Transverse colon (tissue), 4 donors: ENCODE measurements at regions of chr1 and their contacts with region 1.

Region 1: GRCh38 chr1:168504064-168504837 is 39.5 kb downstream of the XCL2 start:
- DNase-seq: peak; percentile 35
- H3K4me3 ChIP-seq: no peak overlapping the region
- H3K27ac ChIP-seq: peak overlapping the region in 1 of 4 donors; percentile 51
- H3K4me1 ChIP-seq: peaks cover 4 to 21% (median 12%) of the 10 kb centered on the region in 4 donors
- H3K27me3 ChIP-seq: no peaks in the 10 kb centered on the region
- CTCF ChIP-seq: no peak
- EP300 ChIP-seq: no peak
- POLR2A ChIP-seq: no peak

Region 2: DNA sequence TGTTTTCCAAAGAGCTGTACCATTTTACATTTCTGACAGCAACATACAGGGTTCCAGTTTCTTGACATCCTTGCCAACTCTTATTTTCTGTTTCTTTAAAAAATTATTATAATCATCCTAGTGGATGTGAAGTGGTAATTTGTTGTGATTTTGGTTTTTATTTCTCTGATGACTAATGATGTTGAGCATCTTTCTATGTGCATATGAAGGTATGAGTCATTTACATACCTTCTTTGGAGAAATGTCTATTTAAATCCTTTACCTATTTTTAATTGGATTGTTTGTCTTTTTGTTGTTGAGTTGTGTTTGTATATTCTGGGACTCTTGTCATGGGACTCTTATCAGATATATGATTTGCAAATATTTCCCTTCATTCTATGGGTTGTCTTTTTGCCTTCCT is 546.5 kb before region 1 on chr1:
- in situ Hi-C with region 1: no loop called
- intact Hi-C with region 1: no loop called
- DNase-seq: no peak
- H3K4me3 ChIP-seq: no peak overlapping the region
- H3K27ac ChIP-seq: no peak overlapping the region
- H3K4me1 ChIP-seq: no peaks in the 10 kb centered on the region
- H3K27me3 ChIP-seq: no peaks in the 10 kb centered on the region
- CTCF ChIP-seq: no peak
- EP300 ChIP-seq: no peak
- POLR2A ChIP-seq: no peak

Region 3: GRCh38 chr1:168535536-168535935 is 31.3 kb after region 1 on chr1:
- in situ Hi-C with region 1: no loop called
- intact Hi-C with region 1: loop called (anchors 1 kb)
- DNase-seq: no peak
- H3K4me3 ChIP-seq: no peak overlapping the region
- H3K27ac ChIP-seq: peak overlapping the region in 2 of 4 donors; percentile 6 to 21
- H3K4me1 ChIP-seq: no peaks in the 10 kb centered on the region
- H3K27me3 ChIP-seq: no peaks in the 10 kb centered on the region
- CTCF ChIP-seq: no peak
- EP300 ChIP-seq: no peak
- POLR2A ChIP-seq: no peak